AG04449 (cell line): ENCODE measurements at regions of chr14 and their contacts with region 1.

Region 1: DNA sequence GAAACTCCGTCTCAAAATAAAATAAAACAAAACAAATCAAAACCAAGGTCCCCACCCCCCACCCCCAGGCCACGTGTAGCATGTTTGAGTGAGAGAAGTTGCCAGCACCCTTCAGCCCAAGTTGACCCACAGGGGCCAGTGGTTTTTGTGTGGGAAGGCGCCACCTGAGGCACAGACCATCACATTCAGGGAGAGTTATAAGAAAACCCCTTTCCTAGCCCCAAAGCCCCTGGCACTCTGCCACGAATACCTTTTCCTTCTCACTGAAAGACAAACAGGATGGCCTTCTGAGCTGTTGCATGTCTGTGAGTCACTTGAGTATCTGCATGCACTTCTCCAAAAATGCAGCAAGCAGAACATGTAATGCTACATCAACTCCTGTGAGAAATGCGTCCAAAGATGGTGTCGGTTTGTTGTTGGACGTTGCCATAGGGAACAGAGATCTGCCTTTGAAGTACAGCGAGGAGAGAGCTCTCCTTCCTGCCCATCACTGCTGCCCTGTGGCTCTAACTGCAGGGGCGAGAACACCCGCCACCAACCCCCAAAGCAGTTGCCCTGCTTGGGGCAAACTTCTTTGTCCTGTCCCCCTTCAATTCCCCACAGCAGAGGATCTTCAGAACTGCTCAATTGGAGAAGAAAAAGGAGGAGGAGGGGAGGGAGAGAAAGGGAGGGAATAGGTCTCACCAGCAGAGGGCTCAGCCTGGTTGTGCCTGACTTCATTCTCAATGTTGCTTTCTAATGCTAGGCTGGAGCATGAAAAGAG is 2.7 kb upstream of the TRAF3 start:
- DNase-seq: no peak
- H3K4me3 ChIP-seq: no peak overlapping the region
- CTCF ChIP-seq: peak; percentile 91

Region 2: GRCh38 chr14:102622262-102622885 is 152.2 kb before region 1 on chr14:
- CTCF ChIA-PET with region 1: no interaction called
- POLR2A ChIA-PET with region 1: no interaction called
- DNase-seq: no peak
- H3K4me3 ChIP-seq: no peak overlapping the region
- CTCF ChIP-seq: no peak

Region 3: GRCh38 chr14:102759456-102760187 is 14.9 kb before region 1 on chr14:
- CTCF ChIA-PET with region 1: interaction called, 11 read pairs
- POLR2A ChIA-PET with region 1: no interaction called
- DNase-seq: no peak
- H3K4me3 ChIP-seq: no peak overlapping the region
- CTCF ChIP-seq: no peak

Region 4: GRCh38 chr14:102785584-102785942 is 11.0 kb after region 1 on chr14:
- CTCF ChIA-PET with region 1: interaction called, 13 read pairs
- POLR2A ChIA-PET with region 1: interaction called, 3 read pairs
- DNase-seq: no peak
- H3K4me3 ChIP-seq: no peak overlapping the region
- CTCF ChIP-seq: no peak

Region 5: DNA sequence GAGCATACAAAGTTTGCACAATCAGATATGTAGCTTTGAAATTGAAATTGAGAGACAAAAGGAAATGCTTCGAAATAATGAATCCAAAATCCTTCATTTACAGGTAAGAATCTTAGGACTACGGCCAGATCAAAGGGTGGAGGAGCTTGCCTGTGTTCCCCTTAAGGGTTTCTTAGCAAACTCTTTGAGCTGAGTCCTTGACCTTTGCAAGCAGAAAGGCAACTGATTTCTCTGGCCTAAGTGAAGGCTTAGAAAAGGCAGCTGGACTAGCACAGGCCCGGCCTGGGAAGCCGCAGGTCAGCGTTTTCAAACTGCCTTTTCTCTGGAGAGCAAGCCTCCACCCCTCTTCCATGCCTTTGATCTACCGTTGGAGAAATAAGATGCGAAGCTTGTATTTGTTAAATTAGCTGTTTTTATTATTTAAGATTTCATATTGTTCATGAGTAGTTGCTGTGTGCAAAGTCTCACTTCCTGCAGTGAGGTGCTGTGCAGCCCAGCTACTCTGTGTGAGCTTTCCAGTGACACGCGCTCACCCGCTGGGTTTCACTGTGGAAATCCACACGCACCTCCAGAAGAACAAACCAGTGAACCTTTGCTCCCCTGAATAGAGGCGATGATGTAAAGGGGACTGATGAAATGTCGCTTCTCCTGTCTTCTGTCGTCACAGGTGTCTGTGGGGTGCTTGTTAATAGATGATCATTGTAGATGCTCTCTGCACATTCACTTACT is 122.9 kb after region 1 on chr14:
- CTCF ChIA-PET with region 1: interaction called, 11 read pairs
- POLR2A ChIA-PET with region 1: interaction called, 3 read pairs
- DNase-seq: no peak
- H3K4me3 ChIP-seq: no peak overlapping the region
- CTCF ChIP-seq: no peak